Activated CD4-positive, alpha-beta T cell treated with anti-CD3 and anti-CD28 coated beads for 36 hours (primary cell): ENCODE measurements at regions of chr5 and their contacts with region 1.

Region 1: DNA sequence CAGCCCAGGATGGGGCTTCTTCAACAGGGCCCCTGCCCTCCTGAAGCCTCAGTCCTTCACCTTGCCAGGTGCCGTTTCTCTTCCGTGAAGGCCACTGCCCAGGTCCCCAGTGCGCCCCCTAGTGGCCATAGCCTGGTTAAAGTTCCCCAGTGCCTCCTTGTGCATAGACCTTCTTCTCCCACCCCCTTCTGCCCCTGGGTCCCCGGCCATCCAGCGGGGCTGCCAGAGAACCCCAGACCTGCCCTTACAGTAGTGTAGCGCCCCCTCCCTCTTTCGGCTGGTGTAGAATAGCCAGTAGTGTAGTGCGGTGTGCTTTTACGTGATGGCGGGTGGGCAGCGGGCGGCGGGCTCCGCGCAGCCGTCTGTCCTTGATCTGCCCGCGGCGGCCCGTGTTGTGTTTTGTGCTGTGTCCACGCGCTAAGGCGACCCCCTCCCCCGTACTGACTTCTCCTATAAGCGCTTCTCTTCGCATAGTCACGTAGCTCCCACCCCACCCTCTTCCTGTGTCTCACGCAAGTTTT is 23.6 kb downstream of the PCDHGC5 start:
- DNase-seq: peak; percentile 93
- ATAC-seq: peak; percentile 17
- H3K4me3 Mint-ChIP-seq: peak overlapping the region; percentile 75
- H3K27ac Mint-ChIP-seq: peak overlapping the region; percentile 86
- H3K4me1 Mint-ChIP-seq: peaks cover 38% of the 10 kb centered on the region
- H3K27me3 Mint-ChIP-seq: no peaks in the 10 kb centered on the region

Region 2: GRCh38 chr5:141320225-141321169 is 192.0 kb before region 1 on chr5 and contains the start of gene TAF7:
- CTCF ChIA-PET with region 1: interaction called, 5 read pairs
- POLR2A ChIA-PET with region 1: no interaction called
- intact Hi-C with region 1: loop called in 1 of 2 experiments (anchors 2 kb)
- DNase-seq: peak; percentile 96
- ATAC-seq: peak; percentile 96
- H3K4me3 Mint-ChIP-seq: peak within 1 kb of the TSS; percentile 91
- H3K27ac Mint-ChIP-seq: peak within 1 kb of the TSS; percentile 100
- H3K4me1 Mint-ChIP-seq: peaks cover 23% of the 10 kb centered on the region
- H3K27me3 Mint-ChIP-seq: peaks cover 2% of the 10 kb centered on the region
- total RNA-seq, gene TAF7: 45.2 to 54.4 TPM

Region 3: GRCh38 chr5:141420855-141421496 is 91.5 kb before region 1 on chr5 and contains the start of gene PCDHGA11:
- CTCF ChIA-PET with region 1: interaction called, 11 read pairs
- POLR2A ChIA-PET with region 1: no interaction called
- intact Hi-C with region 1: loop called in 1 of 2 experiments (anchors 2 kb)
- DNase-seq: peak; percentile 75
- ATAC-seq: peak; percentile 57
- H3K4me3 Mint-ChIP-seq: peak within 1 kb of the TSS; percentile 69
- H3K27ac Mint-ChIP-seq: no peak within 1 kb of the TSS
- H3K4me1 Mint-ChIP-seq: peaks cover 2% of the 10 kb centered on the region
- H3K27me3 Mint-ChIP-seq: peaks cover 70% of the 10 kb centered on the region
- total RNA-seq, gene PCDHGA11: 0.07 TPM in 1 of 2 experiments, not detected in the other

Region 4: GRCh38 chr5:141475625-141476131 is 36.8 kb before region 1 on chr5 and contains the start of gene PCDHGC3:
- CTCF ChIA-PET with region 1: interaction called, 12 read pairs
- POLR2A ChIA-PET with region 1: no interaction called
- intact Hi-C with region 1: loop called (anchors 1 to 5 kb)
- DNase-seq: peak; percentile 79
- ATAC-seq: peak; percentile 97
- H3K4me3 Mint-ChIP-seq: peak within 1 kb of the TSS; percentile 82
- H3K27ac Mint-ChIP-seq: peak within 1 kb of the TSS; percentile 37
- H3K4me1 Mint-ChIP-seq: peaks cover 28% of the 10 kb centered on the region
- H3K27me3 Mint-ChIP-seq: peaks cover 47% of the 10 kb centered on the region
- total RNA-seq, gene PCDHGC3: 0.16 to 0.34 TPM

Region 5: GRCh38 chr5:141524604-141525597 is 12.5 kb after region 1 on chr5:
- CTCF ChIA-PET with region 1: interaction called, 101 read pairs
- POLR2A ChIA-PET with region 1: no interaction called
- intact Hi-C with region 1: no loop called
- DNase-seq: peak; percentile 67
- ATAC-seq: peak; percentile 62
- H3K4me3 Mint-ChIP-seq: no peak overlapping the region
- H3K27ac Mint-ChIP-seq: no peak overlapping the region
- H3K4me1 Mint-ChIP-seq: peaks cover 28% of the 10 kb centered on the region
- H3K27me3 Mint-ChIP-seq: no peaks in the 10 kb centered on the region